ENCODE measurements at regions of chr12 and their contacts with region 1.

Region 1: DNA sequence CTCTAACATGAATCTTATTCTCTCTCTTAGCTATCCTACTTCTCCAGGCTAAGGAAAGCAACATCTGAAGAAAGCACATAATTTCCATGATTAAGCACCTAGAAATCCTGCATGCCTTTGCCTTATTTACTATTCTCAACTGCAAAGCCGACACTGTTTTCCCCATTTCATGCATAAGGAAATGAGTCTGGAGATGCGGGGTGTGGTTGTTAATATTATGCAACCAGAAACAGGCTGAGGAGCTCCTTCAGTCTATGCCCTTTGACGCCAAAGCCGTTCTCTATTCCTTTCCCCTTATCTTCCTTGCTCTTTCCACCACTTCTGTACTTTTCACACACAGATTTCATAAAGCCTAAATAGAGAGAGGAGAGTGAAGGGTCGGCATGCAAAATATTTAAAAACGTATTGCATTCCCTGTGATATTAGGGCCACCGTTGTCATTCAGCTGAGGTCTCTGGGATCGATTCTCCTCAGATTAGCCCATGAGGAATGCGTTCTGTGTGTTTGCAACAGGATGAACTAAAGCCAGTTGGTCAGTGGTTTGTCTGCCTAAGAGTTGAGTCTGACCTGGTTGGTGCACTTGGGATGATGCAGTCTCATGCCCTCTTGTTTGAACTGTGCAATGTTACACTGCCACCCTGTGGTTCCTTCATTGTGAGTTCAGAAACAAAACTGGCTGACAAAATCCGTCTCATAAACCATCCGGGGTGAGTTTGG is 53.1 kb upstream of the PLEKHG7 start:
- DNase-seq: peak; percentile 58 to 71 (median 69)
- H3K4me3 ChIP-seq: peak overlapping the region in 1 of 3 experiments; percentile 34
- H3K4me3 Mint-ChIP-seq: peak overlapping the region; percentile 20 to 73
- H3K27ac ChIP-seq: peak overlapping the region in 1 of 2 donors; percentile 14
- H3K27ac Mint-ChIP-seq: peak overlapping the region; percentile 19 to 85 (median 63)
- H3K4me1 ChIP-seq: peaks cover 9 to 10% of the 10 kb centered on the region in 2 donors
- H3K4me1 Mint-ChIP-seq: peaks cover 15% of the 10 kb centered on the region
- H3K27me3 ChIP-seq: no peaks in the 10 kb centered on the region
- H3K27me3 Mint-ChIP-seq: peaks cover 0 to 3% (median 0%) of the 10 kb centered on the region in 3 donors
- CTCF ChIP-seq: peak; percentile 78

Region 2: GRCh38 chr12:91370086-91370868 is 1279.4 kb before region 1 on chr12:
- intact Hi-C with region 1: loop called in 1 of 2 experiments (anchors 10 kb)
- DNase-seq: peak in 1 of 3 donors; percentile 8
- H3K4me3 ChIP-seq: no peak overlapping the region
- H3K4me3 Mint-ChIP-seq: no peak overlapping the region
- H3K27ac ChIP-seq: no peak overlapping the region
- H3K27ac Mint-ChIP-seq: no peak overlapping the region
- H3K4me1 ChIP-seq: no peaks in the 10 kb centered on the region
- H3K4me1 Mint-ChIP-seq: no peaks in the 10 kb centered on the region
- H3K27me3 ChIP-seq: no peaks in the 10 kb centered on the region
- H3K27me3 Mint-ChIP-seq: peaks cover 0 to 3% (median 2%) of the 10 kb centered on the region in 3 donors
- CTCF ChIP-seq: no peak

Region 3: DNA sequence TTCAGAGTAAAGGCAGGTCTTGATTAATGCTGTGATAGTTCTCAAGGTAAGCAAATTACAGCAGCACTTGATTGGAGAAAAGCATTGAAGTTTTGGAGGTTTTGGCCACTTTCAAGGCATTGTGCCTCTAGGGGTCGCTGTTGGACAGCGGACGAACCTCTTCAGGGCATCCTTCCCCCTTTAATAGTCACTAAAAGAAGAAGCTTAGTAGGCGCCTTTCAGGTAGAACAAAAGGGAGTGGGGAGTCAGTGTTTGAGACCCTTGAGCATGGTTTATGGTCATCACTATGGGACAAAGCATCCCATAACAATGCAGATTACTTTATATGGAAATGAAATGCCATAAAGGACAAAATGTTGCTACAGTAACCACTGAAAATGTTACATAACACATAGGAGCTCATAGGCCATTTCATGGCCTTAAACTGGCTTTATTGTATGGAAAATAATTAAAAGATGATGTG is 1267.6 kb before region 1 on chr12:
- intact Hi-C with region 1: loop called (anchors 10 kb)
- DNase-seq: peak; percentile 60 to 69 (median 68)
- H3K4me3 ChIP-seq: peak overlapping the region in 1 of 3 experiments; percentile 57
- H3K4me3 Mint-ChIP-seq: peak overlapping the region; percentile 62 to 81
- H3K27ac ChIP-seq: no peak overlapping the region
- H3K27ac Mint-ChIP-seq: no peak overlapping the region
- H3K4me1 ChIP-seq: peaks cover 8 to 10% of the 10 kb centered on the region in 2 donors
- H3K4me1 Mint-ChIP-seq: peaks cover 16% of the 10 kb centered on the region
- H3K27me3 ChIP-seq: no peaks in the 10 kb centered on the region
- H3K27me3 Mint-ChIP-seq: peaks cover 0 to 2% (median 2%) of the 10 kb centered on the region in 3 donors
- CTCF ChIP-seq: peak; percentile 98

Region 4: GRCh38 chr12:92445253-92446082 is 204.2 kb before region 1 on chr12:
- intact Hi-C with region 1: loop called in 1 of 2 experiments (anchors 10 kb)
- DNase-seq: peak; percentile 46 to 54 (median 49)
- H3K4me3 ChIP-seq: peak overlapping the region in 2 of 3 experiments; percentile 5 to 13
- H3K4me3 Mint-ChIP-seq: peak overlapping the region in 1 of 2 donors; percentile 60
- H3K27ac ChIP-seq: peak overlapping the region; percentile 45 to 82
- H3K27ac Mint-ChIP-seq: peak overlapping the region; percentile 91 to 98 (median 94)
- H3K4me1 ChIP-seq: peaks cover 19 to 23% of the 10 kb centered on the region in 2 donors
- H3K4me1 Mint-ChIP-seq: peaks cover 31% of the 10 kb centered on the region
- H3K27me3 ChIP-seq: no peaks in the 10 kb centered on the region
- H3K27me3 Mint-ChIP-seq: peaks cover 2 to 6% (median 3%) of the 10 kb centered on the region in 3 donors
- CTCF ChIP-seq: no peak

Region 5: DNA sequence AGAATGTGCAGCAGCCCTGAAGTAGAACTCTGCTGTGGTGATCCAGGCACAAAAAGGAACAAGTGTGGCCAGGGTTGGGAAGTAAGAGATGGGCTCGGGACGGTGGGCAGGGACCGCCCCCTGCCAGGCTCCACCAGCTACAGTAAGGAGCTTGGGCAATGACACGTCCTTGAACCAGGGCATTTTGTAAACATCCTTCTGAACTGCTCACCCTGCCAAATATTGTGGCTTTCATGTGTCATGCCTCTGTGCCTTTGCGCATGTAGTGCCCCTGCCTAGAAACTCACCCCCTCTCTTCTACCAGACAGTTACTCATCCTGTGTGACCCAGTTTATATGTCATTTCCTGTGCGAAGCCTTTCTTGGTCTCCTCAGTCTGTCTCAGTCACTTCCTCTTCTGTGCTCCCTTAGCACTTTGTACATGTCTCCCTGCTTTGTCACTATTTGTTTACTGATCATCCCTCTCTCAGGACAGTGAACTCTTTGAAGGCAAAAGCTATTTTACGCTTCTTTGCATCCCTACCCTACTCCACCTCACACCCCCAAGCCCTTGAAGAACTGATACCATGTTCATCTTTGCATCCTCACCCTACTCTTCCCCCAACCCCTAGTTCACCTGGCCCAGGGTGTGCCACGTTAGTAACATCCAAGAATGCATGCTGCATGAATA is 55.8 kb before region 1 on chr12:
- intact Hi-C with region 1: loop called in 1 of 2 experiments (anchors 5 kb)
- DNase-seq: peak; percentile 96 to 99 (median 97)
- H3K4me3 ChIP-seq: no peak overlapping the region
- H3K4me3 Mint-ChIP-seq: peak overlapping the region; percentile 26 to 66
- H3K27ac ChIP-seq: peak overlapping the region; percentile 44 to 80
- H3K27ac Mint-ChIP-seq: peak overlapping the region; percentile 78 to 96 (median 94)
- H3K4me1 ChIP-seq: peaks cover 11 to 12% of the 10 kb centered on the region in 2 donors
- H3K4me1 Mint-ChIP-seq: peaks cover 29% of the 10 kb centered on the region
- H3K27me3 ChIP-seq: no peaks in the 10 kb centered on the region
- H3K27me3 Mint-ChIP-seq: peaks cover 0 to 8% (median 2%) of the 10 kb centered on the region in 3 donors
- CTCF ChIP-seq: no peak

Region 6: GRCh38 chr12:92753976-92754885 is 104.6 kb after region 1 on chr12:
- intact Hi-C with region 1: no loop called
- DNase-seq: no peak
- H3K4me3 ChIP-seq: no peak overlapping the region
- H3K4me3 Mint-ChIP-seq: no peak overlapping the region
- H3K27ac ChIP-seq: no peak overlapping the region
- H3K27ac Mint-ChIP-seq: no peak overlapping the region
- H3K4me1 ChIP-seq: no peaks in the 10 kb centered on the region
- H3K4me1 Mint-ChIP-seq: peaks cover 3% of the 10 kb centered on the region
- H3K27me3 ChIP-seq: no peaks in the 10 kb centered on the region
- H3K27me3 Mint-ChIP-seq: peaks cover 0 to 3% (median 2%) of the 10 kb centered on the region in 3 donors
- CTCF ChIP-seq: no peak

Region 7: GRCh38 chr12:92871116-92871515 is 221.4 kb after region 1 on chr12:
- intact Hi-C with region 1: no loop called
- DNase-seq: peak; percentile 1 to 22 (median 4)
- H3K4me3 ChIP-seq: peak overlapping the region in 2 of 3 experiments; percentile 21 to 56
- H3K4me3 Mint-ChIP-seq: peak overlapping the region; percentile 38 to 77
- H3K27ac ChIP-seq: peak overlapping the region in 1 of 2 donors; percentile 66
- H3K27ac Mint-ChIP-seq: peak overlapping the region in 6 of 7 donors; percentile 19 to 73 (median 63)
- H3K4me1 ChIP-seq: peaks cover 13 to 17% of the 10 kb centered on the region in 2 donors
- H3K4me1 Mint-ChIP-seq: peaks cover 24% of the 10 kb centered on the region
- H3K27me3 ChIP-seq: no peaks in the 10 kb centered on the region
- H3K27me3 Mint-ChIP-seq: no peaks in the 10 kb centered on the region
- CTCF ChIP-seq: no peak

Measured in CD14-positive monocyte (primary cell).